ENCODE measurements at regions of chr4 and their contacts with region 1.

Region 1: DNA sequence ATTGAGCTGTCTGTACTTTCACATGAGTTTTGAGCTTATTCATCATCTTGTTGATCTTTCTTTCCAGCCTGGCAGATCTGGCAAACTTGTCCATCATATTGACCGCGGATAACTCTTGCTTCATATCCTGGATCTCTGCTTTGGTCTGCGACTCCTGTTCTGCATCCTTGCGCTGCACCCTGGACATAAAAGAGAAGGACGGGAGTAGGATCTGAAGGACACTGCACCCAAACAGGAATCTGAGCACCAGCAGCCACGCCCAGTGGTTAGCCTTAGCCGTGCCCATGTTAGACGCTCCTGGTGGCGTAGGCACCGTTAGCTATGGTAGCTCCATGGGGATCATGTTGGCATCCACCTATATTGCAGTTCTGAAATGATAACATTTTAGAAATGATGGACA is 56.6 kb downstream of the LARP7 start:
- DNase-seq: no peak
- H3K4me3 ChIP-seq: no peak overlapping the region
- H3K27ac ChIP-seq: no peak overlapping the region
- H3K4me1 ChIP-seq: no peaks in the 10 kb centered on the region
- CTCF ChIP-seq: no peak

Region 2: DNA sequence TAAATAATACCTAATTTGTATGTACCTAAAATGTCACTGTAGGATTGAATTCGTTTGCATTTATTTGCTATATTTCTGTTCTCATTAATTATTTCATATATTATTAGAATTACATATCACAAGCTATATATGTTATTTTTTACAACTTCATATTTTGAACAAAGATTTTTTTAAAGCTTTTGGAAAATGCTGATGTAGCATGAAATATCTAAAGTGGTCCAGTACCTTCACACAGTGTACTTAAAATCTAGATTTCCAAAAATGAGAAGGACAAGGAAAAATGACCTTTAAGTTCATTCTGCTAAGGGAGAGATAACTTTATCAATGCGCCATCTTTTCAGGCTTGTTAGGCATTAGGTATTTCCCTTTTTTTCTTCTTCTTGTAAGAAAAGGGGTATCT is 15.3 kb after region 1 on chr4:
- CTCF ChIA-PET with region 1: interaction called, 4 read pairs
- POLR2A ChIA-PET with region 1: interaction called, 15 read pairs
- intact Hi-C with region 1: no loop called
- DNase-seq: no peak
- H3K4me3 ChIP-seq: no peak overlapping the region
- H3K27ac ChIP-seq: no peak overlapping the region
- H3K4me1 ChIP-seq: peaks cover 16% of the 10 kb centered on the region
- CTCF ChIP-seq: no peak

Measured in OCI-LY7 (cell line).